Sigmoid colon (tissue), 7 donors: ENCODE measurements at regions of chr10 and their contacts with region 1.

Region 1: DNA sequence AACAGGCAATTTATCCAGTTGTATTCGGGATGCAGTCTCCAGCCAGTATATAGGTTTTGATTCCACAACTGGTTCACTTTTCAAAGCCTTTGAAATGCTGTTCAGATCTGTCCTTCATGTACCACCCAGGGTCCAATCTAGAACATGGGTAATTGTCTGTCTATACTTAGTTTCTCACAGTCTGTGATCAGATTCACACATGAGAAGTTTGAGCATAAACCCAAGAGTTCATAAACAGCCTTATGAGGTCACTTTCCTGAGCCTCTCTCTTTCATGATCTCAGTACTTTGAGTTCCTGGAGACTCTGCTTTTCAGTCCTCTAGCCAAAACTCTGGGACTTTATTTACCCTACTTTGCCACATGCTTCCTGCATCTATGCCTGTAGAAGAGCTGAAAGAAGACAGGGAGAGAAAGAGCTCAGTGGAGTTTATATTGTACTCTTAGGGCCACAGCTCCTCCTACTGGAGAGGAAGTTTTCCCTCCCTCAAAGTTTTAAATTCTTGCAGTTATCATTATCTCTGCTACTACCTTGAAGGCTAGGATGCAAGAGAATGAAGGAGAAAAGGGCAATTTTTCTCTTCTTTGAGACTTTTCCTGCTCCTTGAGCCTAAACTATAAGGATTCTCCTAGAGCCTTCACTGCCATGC is 172.0 kb downstream of the ZEB1 start:
- DNase-seq: no peak
- H3K4me3 ChIP-seq: no peak overlapping the region
- H3K27ac ChIP-seq: peak overlapping the region in 2 of 4 donors; percentile 27 to 38
- H3K4me1 ChIP-seq: peaks cover 0 to 19% (median 0%) of the 10 kb centered on the region in 4 donors
- H3K27me3 ChIP-seq: no peaks in the 10 kb centered on the region
- CTCF ChIP-seq: peak in 2 of 4 experiments; percentile 56 to 59
- EP300 ChIP-seq: no peak
- POLR2A ChIP-seq: no peak

Region 2: GRCh38 chr10:30727524-30727923 is 763.5 kb before region 1 on chr10:
- intact Hi-C with region 1: loop called (anchors 2 kb)
- DNase-seq: no peak
- H3K4me3 ChIP-seq: no peak overlapping the region
- H3K27ac ChIP-seq: peak overlapping the region in 2 of 4 donors; percentile 59 to 65
- H3K4me1 ChIP-seq: peaks cover 0 to 13% (median 5%) of the 10 kb centered on the region in 4 donors
- H3K27me3 ChIP-seq: no peaks in the 10 kb centered on the region
- CTCF ChIP-seq: no peak
- EP300 ChIP-seq: no peak
- POLR2A ChIP-seq: no peak

Region 3: DNA sequence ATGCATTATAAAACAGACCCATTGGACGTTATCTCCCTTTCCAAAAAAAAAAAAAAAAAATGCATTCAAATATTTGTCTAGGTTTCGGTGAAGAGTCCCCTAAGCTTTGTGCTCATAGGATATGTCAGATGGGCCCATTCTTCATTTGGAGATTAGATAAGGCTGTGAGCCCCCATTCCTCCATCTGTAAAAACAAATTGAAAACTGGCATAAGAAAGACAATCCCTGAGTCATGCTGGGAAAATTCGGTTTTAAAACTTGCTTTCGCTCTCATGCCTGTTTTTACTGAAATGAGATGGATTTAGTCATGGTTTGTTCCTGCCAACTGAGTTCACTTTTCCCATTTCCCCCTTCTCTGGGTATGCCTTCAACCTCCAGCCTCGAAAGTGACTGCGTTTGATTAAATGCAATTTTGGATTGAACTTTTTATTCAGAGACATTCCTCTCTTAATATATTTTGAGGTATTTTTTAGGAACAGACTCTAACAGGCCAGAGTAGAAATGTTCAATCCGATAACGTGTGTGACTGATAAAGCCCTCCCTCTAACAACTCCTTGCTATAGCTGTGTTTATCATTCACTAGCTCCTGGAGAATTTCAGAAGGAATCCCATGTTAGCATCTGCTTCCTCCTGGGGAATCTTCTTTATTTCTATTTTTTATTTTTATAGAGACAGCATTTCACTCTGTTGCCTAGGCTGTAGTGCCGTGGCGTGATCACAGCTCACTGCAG is 670.6 kb before region 1 on chr10:
- intact Hi-C with region 1: loop called (anchors 5 kb)
- DNase-seq: peak; percentile 41
- H3K4me3 ChIP-seq: no peak overlapping the region
- H3K27ac ChIP-seq: peak overlapping the region; percentile 63 to 94 (median 84)
- H3K4me1 ChIP-seq: peaks cover 0 to 69% (median 58%) of the 10 kb centered on the region in 4 donors
- H3K27me3 ChIP-seq: no peaks in the 10 kb centered on the region
- CTCF ChIP-seq: no peak
- EP300 ChIP-seq: no peak
- POLR2A ChIP-seq: no peak